CD14-positive monocyte (primary cell): ENCODE measurements at regions of chr1 and their contacts with region 1.

Region 1: DNA sequence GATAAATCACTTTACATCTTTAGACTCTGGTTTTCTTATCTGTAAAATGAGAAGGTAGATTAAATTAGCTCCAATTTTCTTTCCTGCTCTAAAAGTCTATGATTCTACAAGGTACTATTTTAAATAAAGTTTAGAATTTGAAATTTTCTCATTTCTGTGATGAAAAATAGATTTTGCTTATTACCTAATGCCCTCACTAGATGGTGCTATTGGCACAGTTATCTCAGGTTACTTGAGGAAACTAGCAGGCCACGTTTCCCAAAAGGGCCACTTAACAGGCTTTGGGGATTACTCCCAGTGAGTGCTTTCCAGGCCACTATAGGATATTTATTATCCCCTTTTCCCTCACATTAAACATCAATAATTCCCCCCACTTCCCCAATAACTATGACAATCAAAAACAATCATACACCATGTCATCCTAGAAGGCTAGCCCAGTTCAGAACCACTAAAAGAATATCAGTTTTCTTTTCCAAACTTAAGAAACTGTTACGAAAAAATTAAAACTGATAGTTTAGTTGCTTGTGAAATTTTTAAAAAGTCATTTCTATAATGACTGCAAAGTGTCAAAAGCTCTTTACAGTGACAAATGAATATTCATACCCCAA is 30.6 kb downstream of the OMA1 start:
- DNase-seq: peak; percentile 58 to 79 (median 75)
- H3K4me3 ChIP-seq: no peak overlapping the region
- H3K4me3 Mint-ChIP-seq: no peak overlapping the region
- H3K27ac ChIP-seq: no peak overlapping the region
- H3K27ac Mint-ChIP-seq: peak overlapping the region in 1 of 7 donors; percentile 58
- H3K4me1 ChIP-seq: no peaks in the 10 kb centered on the region
- H3K4me1 Mint-ChIP-seq: peaks cover 2% of the 10 kb centered on the region
- H3K27me3 ChIP-seq: no peaks in the 10 kb centered on the region
- H3K27me3 Mint-ChIP-seq: peaks cover 0 to 2% (median 0%) of the 10 kb centered on the region in 3 donors
- CTCF ChIP-seq: peak; percentile 89

Region 2: DNA sequence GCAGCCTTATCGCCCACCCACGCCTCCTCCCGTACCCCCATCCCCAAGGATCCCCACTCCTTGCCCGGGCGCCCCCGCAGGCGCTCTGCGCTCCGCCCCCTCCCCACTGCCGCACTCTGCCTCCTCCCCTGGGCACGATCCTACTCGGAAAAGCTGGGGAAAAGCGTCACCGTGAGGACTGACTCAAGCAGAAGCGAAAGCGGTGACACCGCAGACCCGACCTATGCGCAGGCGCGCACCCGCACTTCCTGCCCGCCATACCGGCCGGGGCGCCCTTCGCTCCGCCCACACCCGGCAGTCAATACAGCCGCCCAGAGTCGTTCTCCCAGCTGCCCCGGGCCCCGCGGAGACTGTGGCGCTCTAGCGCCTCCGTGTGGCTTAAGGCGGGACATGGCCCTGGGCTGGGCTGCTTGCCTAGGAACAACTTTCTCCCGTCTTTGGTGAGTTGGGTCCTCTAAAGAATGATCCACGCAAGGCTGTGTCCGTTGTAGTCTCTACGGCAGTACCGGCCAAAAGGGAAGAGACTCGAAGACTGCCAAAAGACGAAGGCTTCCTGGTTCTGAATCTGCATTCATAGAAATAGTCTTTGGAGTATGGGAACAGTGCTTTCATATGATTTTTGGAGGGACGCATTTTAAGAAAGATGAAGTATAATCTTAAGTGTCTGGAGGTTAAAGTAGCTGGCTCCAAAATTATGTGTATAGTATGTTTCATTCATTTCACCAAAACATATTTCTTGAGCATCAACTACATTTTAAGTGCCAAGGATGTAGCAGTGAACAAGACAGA is 30.8 kb after region 1 on chr1 and contains the start of gene OMA1:
- intact Hi-C with region 1: loop called (anchors 1 to 2 kb)
- DNase-seq: peak; percentile 98 to 99 (median 99)
- H3K4me3 ChIP-seq: peak within 1 kb of the TSS; percentile 56 to 83 (median 75)
- H3K4me3 Mint-ChIP-seq: peak within 1 kb of the TSS; percentile 88 to 92
- H3K27ac ChIP-seq: peak within 1 kb of the TSS; percentile 96 to 97
- H3K27ac Mint-ChIP-seq: peak within 1 kb of the TSS; percentile 96 to 98 (median 98)
- H3K4me1 ChIP-seq: peaks cover 10 to 32% of the 10 kb centered on the region in 2 donors
- H3K4me1 Mint-ChIP-seq: peaks cover 22% of the 10 kb centered on the region
- H3K27me3 ChIP-seq: no peaks in the 10 kb centered on the region
- H3K27me3 Mint-ChIP-seq: no peaks in the 10 kb centered on the region
- CTCF ChIP-seq: peak; percentile 89
- polyA plus RNA-seq, gene OMA1: 11.2 to 24.5 (median 15.3) TPM

Region 3: GRCh38 chr1:58652651-58653184 is 136.8 kb after region 1 on chr1:
- intact Hi-C with region 1: loop called (anchors 5 kb)
- DNase-seq: peak; percentile 64 to 72 (median 71)
- H3K4me3 ChIP-seq: no peak overlapping the region
- H3K4me3 Mint-ChIP-seq: no peak overlapping the region
- H3K27ac ChIP-seq: no peak overlapping the region
- H3K27ac Mint-ChIP-seq: no peak overlapping the region
- H3K4me1 ChIP-seq: peaks cover 6 to 17% of the 10 kb centered on the region in 2 donors
- H3K4me1 Mint-ChIP-seq: peaks cover 15% of the 10 kb centered on the region
- H3K27me3 ChIP-seq: no peaks in the 10 kb centered on the region
- H3K27me3 Mint-ChIP-seq: no peaks in the 10 kb centered on the region
- CTCF ChIP-seq: peak; percentile 80

Region 4: GRCh38 chr1:59759156-59759925 is 1243.4 kb after region 1 on chr1:
- intact Hi-C with region 1: loop called (anchors 5 to 10 kb)
- DNase-seq: peak; percentile 67 to 80 (median 73)
- H3K4me3 ChIP-seq: peak overlapping the region in 2 of 3 experiments; percentile 23 to 63
- H3K4me3 Mint-ChIP-seq: peak overlapping the region; percentile 72 to 91
- H3K27ac ChIP-seq: no peak overlapping the region
- H3K27ac Mint-ChIP-seq: peak overlapping the region in 2 of 7 donors; percentile 3 to 8
- H3K4me1 ChIP-seq: peaks cover 6 to 7% of the 10 kb centered on the region in 2 donors
- H3K4me1 Mint-ChIP-seq: peaks cover 8% of the 10 kb centered on the region
- H3K27me3 ChIP-seq: no peaks in the 10 kb centered on the region
- H3K27me3 Mint-ChIP-seq: peaks cover 0 to 2% (median 1%) of the 10 kb centered on the region in 3 donors
- CTCF ChIP-seq: peak; percentile 94